ENCODE measurements at regions of chr2 and their contacts with region 1.

Region 1: DNA sequence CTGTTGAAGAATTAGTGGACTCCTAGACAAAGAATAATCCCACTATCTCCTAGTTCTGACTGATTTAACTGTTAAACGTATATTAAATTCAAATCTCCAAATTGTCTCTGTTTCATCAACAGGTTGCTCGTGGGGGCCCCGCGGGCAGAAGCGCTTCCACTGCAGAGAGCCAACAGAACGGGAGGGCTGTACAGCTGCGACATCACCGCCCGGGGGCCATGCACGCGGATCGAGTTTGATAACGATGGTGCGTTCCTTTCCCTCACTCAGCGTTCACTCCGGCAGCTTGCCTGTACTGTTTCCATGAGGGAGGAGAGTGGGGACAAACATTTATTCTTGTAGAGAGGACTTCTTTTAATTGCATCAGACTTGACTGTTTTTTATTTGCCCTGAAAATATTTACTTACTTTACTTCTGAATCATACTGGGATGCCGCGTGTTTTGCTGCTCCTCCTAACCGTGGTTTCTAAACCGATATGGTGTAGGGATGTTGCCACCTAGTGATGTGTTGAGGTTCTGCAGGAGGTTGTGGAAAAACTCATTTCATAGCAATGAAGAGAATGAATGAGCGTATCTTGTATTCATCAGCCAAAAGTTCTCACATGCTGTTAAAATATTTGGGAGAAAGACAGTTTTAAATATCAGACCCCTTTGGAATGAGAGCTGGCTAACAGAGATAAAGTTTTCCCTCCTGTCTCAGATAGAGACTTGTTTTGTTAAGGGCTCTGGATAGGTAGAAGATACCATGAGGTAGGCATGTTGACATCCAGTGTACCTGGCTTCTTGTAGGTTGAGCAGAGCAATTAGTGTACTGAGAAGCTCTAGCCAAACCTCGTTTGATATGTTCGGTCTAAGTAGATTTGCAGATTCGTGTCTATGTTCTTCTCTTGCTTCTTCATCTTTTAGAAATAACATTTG is 38.3 kb downstream of the ITGA6 start:
- DNase-seq: peak; percentile 38
- H3K4me3 ChIP-seq: peak overlapping the region; percentile 33
- H3K27me3 ChIP-seq: no peaks in the 10 kb centered on the region
- CTCF ChIP-seq: peak; percentile 82

Region 2: DNA sequence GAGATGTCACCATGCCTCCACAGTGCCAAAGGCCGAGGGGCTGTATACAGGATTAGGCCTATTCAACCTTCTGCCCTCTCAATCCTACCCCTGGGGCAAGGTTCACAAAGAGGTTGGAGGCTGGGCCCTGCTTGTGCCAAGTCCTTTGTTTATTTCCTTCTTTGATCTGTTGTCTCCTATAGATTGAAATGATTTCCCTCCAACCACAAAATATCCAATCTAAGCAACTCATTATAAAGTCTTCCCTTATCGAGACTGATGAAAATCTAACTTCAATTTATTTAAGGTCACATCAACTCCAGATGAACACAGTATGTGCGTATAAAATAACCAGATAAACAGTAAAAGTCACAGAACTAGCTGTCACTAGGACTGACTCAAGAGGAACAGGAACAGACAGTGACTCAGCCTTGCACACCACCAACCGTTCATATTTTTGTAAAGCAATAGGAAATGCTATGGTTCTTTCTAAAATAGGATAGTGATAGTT is 667.4 kb before region 1 on chr2:
- CTCF ChIA-PET with region 1: no interaction called
- POLR2A ChIA-PET with region 1: no interaction called
- DNase-seq: peak; percentile 35
- H3K4me3 ChIP-seq: no peak overlapping the region
- H3K27me3 ChIP-seq: no peaks in the 10 kb centered on the region
- CTCF ChIP-seq: no peak

Region 3: GRCh38 chr2:172172513-172173173 is 293.0 kb before region 1 on chr2:
- CTCF ChIA-PET with region 1: interaction called, 263 read pairs
- POLR2A ChIA-PET with region 1: interaction called, 5 read pairs
- DNase-seq: no peak
- H3K4me3 ChIP-seq: peak overlapping the region; percentile 58
- H3K27me3 ChIP-seq: no peaks in the 10 kb centered on the region
- CTCF ChIP-seq: peak; percentile 72

Region 4: GRCh38 chr2:172200495-172201085 is 265.1 kb before region 1 on chr2:
- CTCF ChIA-PET with region 1: interaction called, 36 read pairs
- POLR2A ChIA-PET with region 1: no interaction called
- DNase-seq: no peak
- H3K4me3 ChIP-seq: no peak overlapping the region
- H3K27me3 ChIP-seq: no peaks in the 10 kb centered on the region
- CTCF ChIP-seq: peak; percentile 54

Region 5: GRCh38 chr2:172285010-172285621 is 180.6 kb before region 1 on chr2:
- CTCF ChIA-PET with region 1: interaction called, 10 read pairs
- POLR2A ChIA-PET with region 1: no interaction called
- DNase-seq: peak; percentile 53
- H3K4me3 ChIP-seq: no peak overlapping the region
- H3K27me3 ChIP-seq: no peaks in the 10 kb centered on the region
- CTCF ChIP-seq: no peak

Region 6: DNA sequence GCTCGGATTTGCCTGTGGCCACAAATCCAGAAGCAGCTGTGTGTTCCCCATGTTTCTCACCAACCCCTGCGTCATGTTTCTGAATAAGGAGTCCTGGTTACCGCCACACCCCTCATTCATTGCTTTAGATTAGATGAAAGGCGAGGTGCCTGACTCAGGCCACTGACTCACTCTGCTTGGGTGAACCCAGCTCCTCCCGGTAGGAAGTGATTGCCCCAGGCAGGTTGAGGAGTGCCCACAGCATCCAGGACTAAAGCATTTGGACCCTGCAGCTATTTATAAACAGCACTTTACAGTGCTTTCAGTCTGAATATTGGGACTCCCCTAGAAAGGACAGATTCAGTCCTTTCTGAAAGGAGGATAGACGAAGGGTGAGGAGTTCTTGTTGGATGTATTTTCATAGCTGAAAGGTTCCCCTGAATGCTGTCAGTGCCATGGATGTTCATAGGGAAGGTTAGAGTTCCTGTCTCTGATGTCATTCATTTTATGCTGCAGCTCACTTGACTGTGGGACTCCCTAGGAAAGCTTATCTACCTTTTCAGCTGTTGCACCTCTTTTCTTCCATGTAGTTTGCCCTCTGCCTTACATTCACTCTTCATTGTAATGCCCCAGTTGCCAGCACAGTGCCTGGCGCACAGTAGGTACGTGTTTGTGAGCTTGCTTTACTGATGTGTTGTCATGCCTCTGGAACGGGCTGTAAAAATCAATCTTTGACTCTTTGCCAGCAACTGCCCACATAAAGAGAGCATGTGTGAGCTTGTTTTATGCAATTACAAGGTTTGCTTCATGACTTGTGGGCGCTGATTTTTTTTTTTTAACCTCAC is 23.4 kb before region 1 on chr2:
- CTCF ChIA-PET with region 1: interaction called, 57 read pairs
- POLR2A ChIA-PET with region 1: no interaction called
- DNase-seq: peak; percentile 83
- H3K4me3 ChIP-seq: no peak overlapping the region
- H3K27me3 ChIP-seq: no peaks in the 10 kb centered on the region
- CTCF ChIP-seq: no peak